ENCODE measurements at regions of chr1 and their contacts with region 1.

Region 1: DNA sequence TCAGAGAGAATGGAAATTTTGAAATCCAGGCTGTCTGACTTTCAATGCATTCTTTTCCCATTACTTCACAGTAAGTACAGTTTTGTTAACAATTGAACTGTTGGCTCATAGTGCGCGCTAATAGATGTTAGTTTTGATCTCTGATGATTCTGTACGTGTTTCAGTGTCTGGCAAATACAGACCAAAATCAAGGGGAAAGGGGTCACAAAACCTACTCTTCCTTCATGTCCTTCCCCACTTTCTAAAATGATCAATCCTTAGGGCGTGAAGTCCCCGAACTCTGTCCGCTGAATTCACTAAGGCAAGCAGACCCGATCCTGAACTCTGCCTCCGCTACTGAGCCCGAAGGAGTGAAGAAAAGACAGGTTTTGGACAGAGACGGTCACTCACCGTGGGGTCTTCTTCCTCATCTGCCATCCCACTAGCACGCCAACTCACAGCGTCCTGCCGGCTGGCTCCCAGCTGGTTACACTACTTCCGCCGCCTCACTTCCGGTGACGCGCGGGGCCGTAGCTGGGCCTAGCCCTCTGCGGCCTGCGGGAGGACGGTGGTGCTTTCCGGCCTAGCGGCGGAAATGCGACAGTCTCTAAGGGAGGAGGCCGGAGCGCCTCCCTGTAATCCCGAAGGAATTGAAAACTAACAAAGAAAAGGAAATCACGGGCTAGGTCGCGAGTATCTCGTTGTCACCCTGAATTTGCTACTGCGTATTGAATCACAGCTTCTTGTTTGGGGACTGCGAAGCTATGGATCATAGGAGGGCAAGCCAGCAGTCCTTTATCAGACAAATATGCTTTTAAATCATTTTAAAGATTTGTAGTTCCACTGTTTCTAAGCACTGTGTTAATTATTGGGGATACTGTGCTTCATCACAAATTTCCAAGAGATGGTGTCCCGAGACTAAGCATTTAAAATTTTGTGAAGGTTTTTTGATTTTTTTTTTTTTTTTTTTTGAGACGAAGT is at the start of gene TAF13:
- DNase-seq: peak; percentile 91 to 98 (median 96)
- H3K4me3 ChIP-seq: peak within 1 kb of the TSS; percentile 58 to 100 (median 84)
- H3K27ac ChIP-seq: peak within 1 kb of the TSS; percentile 78 to 100 (median 97)
- H3K27me3 ChIP-seq: no peaks in the 10 kb centered on the region
- CTCF ChIP-seq: peak in 55 of 56 donors; percentile 6 to 72 (median 54)
- total RNA-seq, gene TAF13: 41.9 to 89.0 (median 66.0) TPM

Region 2: DNA sequence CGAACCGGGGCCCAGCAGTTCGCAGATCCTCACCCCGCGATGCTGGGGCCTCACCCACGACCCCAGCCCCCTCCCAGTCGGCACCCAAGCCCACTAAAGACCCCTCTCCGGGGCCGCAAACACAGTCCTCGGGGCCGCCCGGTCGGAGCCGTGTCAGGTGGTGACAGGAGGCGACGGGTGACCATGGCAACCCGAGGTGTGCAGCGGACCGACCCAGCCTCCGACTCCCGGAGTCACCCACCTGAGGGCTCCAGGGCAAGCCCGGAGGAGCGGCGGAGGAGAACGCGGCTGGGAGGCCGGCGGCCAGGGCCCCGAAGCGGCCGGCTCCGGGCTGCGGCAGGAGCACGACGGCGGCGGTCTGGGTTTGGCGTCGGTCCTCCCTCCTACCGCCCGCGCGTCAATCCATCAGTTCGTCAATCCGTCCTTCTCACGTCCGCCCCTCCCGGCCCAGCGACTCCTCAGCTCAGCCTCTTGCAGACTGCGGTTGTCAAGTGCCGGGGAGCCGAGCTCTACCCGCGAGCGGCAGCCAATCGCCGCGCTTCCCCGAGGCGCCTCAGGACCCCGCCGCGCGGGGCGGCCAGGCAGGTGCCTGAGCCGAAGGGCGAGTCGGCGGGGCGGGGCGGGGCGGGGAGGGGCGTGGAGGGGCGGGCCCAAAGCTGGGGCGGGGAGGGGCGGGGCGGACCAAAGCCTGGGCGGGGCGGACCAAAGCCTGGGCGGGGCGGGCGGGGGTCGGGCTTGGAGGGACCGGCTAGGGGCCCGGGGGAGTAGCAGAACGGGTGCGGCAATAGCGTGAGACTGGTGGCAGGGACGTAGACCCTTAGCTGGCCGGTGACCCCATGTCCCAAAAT is 34.0 kb before region 1 on chr1 and contains the start of gene WDR47:
- intact Hi-C with region 1: loop called (anchors 5 kb)
- DNase-seq: peak; percentile 83 to 98 (median 96)
- H3K4me3 ChIP-seq: peak within 1 kb of the TSS; percentile 63 to 100 (median 97)
- H3K27ac ChIP-seq: peak within 1 kb of the TSS; percentile 53 to 97 (median 90)
- H3K27me3 ChIP-seq: no peaks in the 10 kb centered on the region
- CTCF ChIP-seq: peak in 13 of 56 donors; percentile 4 to 34 (median 17)
- total RNA-seq, gene WDR47: 66.3 to 166 (median 128) TPM

Region 3: GRCh38 chr1:109056064-109056463 is 19.7 kb before region 1 on chr1:
- intact Hi-C with region 1: no loop called
- DNase-seq: no peak
- H3K4me3 ChIP-seq: no peak overlapping the region
- H3K27ac ChIP-seq: no peak overlapping the region
- H3K27me3 ChIP-seq: no peaks in the 10 kb centered on the region
- CTCF ChIP-seq: no peak

Region 4: GRCh38 chr1:109099938-109100773 is 24.3 kb after region 1 on chr1:
- intact Hi-C with region 1: loop called in 1 of 2 experiments (anchors 1 kb)
- DNase-seq: peak; percentile 91 to 97 (median 96)
- H3K4me3 ChIP-seq: peak overlapping the region; percentile 69 to 100 (median 97)
- H3K27ac ChIP-seq: peak overlapping the region; percentile 84 to 100 (median 98)
- H3K27me3 ChIP-seq: no peaks in the 10 kb centered on the region
- CTCF ChIP-seq: peak; percentile 83 to 99 (median 95)